Stomach (tissue), 19 donors: ENCODE measurements at regions of chr2 and their contacts with region 1.

Region 1: GRCh38 chr2:229133155-229133772 is 137.8 kb downstream of the PID1 start:
- DNase-seq: peak in 1 of 2 donors; percentile 79
- H3K4me3 ChIP-seq: no peak overlapping the region
- H3K27ac ChIP-seq: no peak overlapping the region
- H3K4me1 ChIP-seq: peaks cover 0 to 13% (median 0%) of the 10 kb centered on the region in 4 donors
- H3K27me3 ChIP-seq: no peaks in the 10 kb centered on the region
- CTCF ChIP-seq: peak in 4 of 7 experiments; percentile 32 to 36 (median 34)
- EP300 ChIP-seq: no peak
- POLR2A ChIP-seq: no peak

Region 2: DNA sequence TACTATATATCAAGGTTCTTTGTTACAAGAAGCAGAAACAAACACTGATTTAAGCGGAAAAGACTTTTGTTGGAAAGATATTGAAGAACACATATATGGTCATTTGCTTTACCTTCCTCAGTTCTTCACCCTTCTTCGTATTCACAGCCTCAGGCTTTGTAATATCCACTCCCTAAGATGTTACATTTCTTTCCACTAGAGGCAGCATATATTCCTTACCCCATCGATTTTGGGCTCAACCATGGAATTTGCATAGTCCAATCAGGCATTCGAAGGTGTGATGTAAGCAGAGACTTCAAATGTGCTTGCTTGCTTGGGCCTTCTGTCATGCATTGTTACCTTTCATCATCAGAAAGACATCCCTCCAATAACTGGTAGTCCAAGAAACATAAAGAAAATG is 149.6 kb before region 1 on chr2:
- intact Hi-C with region 1: no loop called
- DNase-seq: no peak
- H3K4me3 ChIP-seq: no peak overlapping the region
- H3K27ac ChIP-seq: no peak overlapping the region
- H3K4me1 ChIP-seq: no peaks in the 10 kb centered on the region
- H3K27me3 ChIP-seq: no peaks in the 10 kb centered on the region
- CTCF ChIP-seq: no peak
- EP300 ChIP-seq: no peak
- POLR2A ChIP-seq: no peak

Region 3: GRCh38 chr2:229027353-229028105 is 105.7 kb before region 1 on chr2:
- intact Hi-C with region 1: no loop called
- DNase-seq: no peak
- H3K4me3 ChIP-seq: no peak overlapping the region
- H3K27ac ChIP-seq: no peak overlapping the region
- H3K4me1 ChIP-seq: no peaks in the 10 kb centered on the region
- H3K27me3 ChIP-seq: no peaks in the 10 kb centered on the region
- CTCF ChIP-seq: no peak
- EP300 ChIP-seq: no peak
- POLR2A ChIP-seq: no peak

Region 4: GRCh38 chr2:229154381-229154780 is 21.1 kb after region 1 on chr2:
- intact Hi-C with region 1: no loop called
- DNase-seq: no peak
- H3K4me3 ChIP-seq: no peak overlapping the region
- H3K27ac ChIP-seq: no peak overlapping the region
- H3K4me1 ChIP-seq: no peaks in the 10 kb centered on the region
- H3K27me3 ChIP-seq: no peaks in the 10 kb centered on the region
- CTCF ChIP-seq: no peak
- EP300 ChIP-seq: no peak
- POLR2A ChIP-seq: no peak

Region 5: GRCh38 chr2:229226382-229226781 is 93.1 kb after region 1 on chr2:
- intact Hi-C with region 1: no loop called
- DNase-seq: peak in 1 of 2 donors; percentile 65
- H3K4me3 ChIP-seq: no peak overlapping the region
- H3K27ac ChIP-seq: peak overlapping the region in 1 of 5 donors; percentile 29
- H3K4me1 ChIP-seq: peaks cover 0 to 14% (median 0%) of the 10 kb centered on the region in 4 donors
- H3K27me3 ChIP-seq: no peaks in the 10 kb centered on the region
- CTCF ChIP-seq: no peak
- EP300 ChIP-seq: no peak
- POLR2A ChIP-seq: no peak

Region 6: DNA sequence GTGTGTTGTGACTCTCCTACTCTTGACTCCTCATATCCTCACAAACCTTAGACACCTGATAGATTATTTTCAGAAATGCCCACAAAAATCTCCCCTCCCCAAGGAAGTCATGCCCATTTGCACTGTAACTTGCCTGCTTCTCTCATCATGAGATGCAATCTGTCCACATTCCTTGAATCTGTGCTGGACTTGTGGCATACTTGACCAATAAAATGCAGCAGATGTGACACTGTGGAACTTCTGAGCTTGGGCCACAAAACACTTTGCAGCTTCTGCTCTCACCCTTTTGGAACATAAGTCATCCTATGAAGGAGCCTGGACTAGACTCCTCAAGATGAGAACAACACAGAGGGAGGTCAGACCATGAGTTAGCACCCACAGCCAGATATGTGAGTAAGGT is 142.2 kb after region 1 on chr2:
- intact Hi-C with region 1: loop called (anchors 5 kb)
- DNase-seq: no peak
- H3K4me3 ChIP-seq: no peak overlapping the region
- H3K27ac ChIP-seq: no peak overlapping the region
- H3K4me1 ChIP-seq: peaks cover 9 to 31% (median 19%) of the 10 kb centered on the region in 4 donors
- H3K27me3 ChIP-seq: peaks cover 0 to 18% (median 0%) of the 10 kb centered on the region in 3 donors
- CTCF ChIP-seq: no peak
- EP300 ChIP-seq: no peak
- POLR2A ChIP-seq: no peak